ENCODE measurements at regions of chr7 and their contacts with region 1.

Region 1: DNA sequence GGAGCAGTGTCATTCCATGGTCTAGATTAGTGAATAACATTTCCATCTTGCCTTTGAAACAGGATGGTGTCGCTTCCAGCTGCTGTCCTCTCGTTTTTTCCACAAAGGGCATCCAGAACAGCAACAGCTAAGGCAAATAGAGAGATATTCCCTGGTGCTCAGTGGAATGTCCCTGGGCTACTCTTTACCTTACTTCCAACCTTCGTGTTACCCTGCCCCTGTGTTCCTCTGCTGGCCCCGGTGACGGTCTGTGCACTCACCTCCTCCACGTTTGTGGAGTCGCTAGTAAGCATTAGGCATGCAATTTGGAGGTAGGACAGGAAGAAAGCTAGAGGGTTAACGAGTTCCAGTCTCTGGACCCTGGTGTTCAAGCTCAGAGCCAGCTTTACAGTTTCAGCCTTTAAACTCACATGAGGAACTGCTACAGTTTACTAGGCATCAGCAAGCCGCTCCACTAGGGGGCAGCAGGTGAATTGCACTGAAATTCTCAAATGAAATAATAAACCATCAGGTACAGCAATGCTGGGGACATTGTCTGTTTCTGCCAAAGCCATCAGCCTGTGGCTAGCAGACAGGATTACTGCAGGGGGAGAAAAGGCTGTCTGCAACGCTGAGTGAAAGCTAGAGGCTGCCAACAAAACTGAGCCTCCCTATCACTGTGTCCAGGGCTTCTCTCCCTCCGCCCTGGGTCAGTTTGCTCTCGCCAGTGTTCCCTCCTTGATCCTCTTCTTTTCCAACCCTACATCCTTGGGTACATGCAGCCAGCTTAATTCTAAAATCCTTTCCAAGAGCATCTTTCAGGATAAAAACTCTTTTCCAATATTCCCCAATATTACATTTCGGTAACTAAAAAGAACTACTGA is 9.0 kb downstream of the MRPL32 start:
- DNase-seq: peak; percentile 48
- ATAC-seq: peak; percentile 66
- H3K4me3 ChIP-seq: no peak overlapping the region
- H3K27ac ChIP-seq: no peak overlapping the region
- H3K4me1 ChIP-seq: peaks cover 12% of the 10 kb centered on the region; the same call in 1 of the 2 replicates
- H3K27me3 ChIP-seq: no peaks in the 10 kb centered on the region
- CTCF ChIP-seq: peak; percentile 87 to 92 (median 91)
- EP300 ChIP-seq: no peak
- POLR2A ChIP-seq: no peak
- RAD21 ChIP-seq: peak; percentile 97

Region 2: GRCh38 chr7:42924223-42924838 is 16.9 kb before region 1 on chr7:
- CTCF ChIA-PET with region 1: interaction called, 13 read pairs
- POLR2A ChIA-PET with region 1: interaction called, 50 read pairs
- RAD21 ChIA-PET with region 1: interaction called, 20 read pairs
- SMC1A ChIA-PET with region 1: interaction called, 30 read pairs
- in situ Hi-C with region 1: no loop called
- intact Hi-C with region 1: no loop called
- DNase-seq: no peak
- ATAC-seq: peak; percentile 52
- H3K4me3 ChIP-seq: no peak overlapping the region
- H3K27ac ChIP-seq: peak overlapping the region; percentile 53
- H3K4me1 ChIP-seq: no peaks in the 10 kb centered on the region; the same call in 1 of the 2 replicates
- H3K27me3 ChIP-seq: no peaks in the 10 kb centered on the region
- CTCF ChIP-seq: no peak
- EP300 ChIP-seq: no peak
- POLR2A ChIP-seq: no peak
- RAD21 ChIP-seq: no peak

Region 3: DNA sequence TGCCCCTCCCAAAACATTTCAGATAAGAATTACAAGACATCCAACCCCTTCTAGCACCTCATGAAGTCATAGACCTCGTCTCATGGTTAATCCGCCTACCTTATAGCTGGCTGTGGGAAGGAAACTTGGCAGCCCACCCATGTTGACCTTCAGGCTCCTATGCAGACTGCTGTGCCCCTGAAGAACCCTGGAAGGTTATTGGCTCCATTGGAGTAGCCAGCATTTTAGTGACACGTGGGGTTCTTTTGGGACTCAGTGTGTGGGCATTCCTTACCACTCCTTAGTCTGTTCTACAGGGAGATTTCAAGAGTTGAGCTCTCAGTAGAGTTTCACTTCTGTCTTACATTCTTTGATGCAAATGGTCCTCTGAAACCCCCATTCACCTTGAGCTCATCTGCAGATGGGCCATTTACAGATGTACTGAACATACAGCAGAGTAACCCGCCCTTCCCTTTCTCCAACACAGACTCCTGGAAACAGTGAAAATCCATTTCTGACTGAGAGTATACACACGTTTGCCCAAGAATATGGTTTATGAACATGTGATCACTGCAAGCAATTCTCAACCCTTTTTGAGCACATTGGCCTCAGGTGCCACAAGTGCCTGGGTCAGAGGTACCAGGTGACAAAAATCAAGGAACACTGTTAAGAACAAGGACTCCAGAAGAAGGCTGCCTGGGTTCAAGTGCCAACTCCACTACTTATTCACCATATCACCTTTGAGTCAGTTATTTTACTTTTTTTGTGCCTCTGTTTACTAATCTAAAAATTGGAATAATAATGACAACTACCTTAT is 117.3 kb after region 1 on chr7:
- CTCF ChIA-PET with region 1: interaction called, 8 read pairs
- POLR2A ChIA-PET with region 1: no interaction called
- RAD21 ChIA-PET with region 1: interaction called, 8 read pairs
- SMC1A ChIA-PET with region 1: interaction called, 9 read pairs
- in situ Hi-C with region 1: no loop called
- intact Hi-C with region 1: loop called (anchors 2 kb)
- DNase-seq: peak; percentile 53
- ATAC-seq: peak; percentile 61
- H3K4me3 ChIP-seq: no peak overlapping the region
- H3K27ac ChIP-seq: no peak overlapping the region
- H3K4me1 ChIP-seq: peaks cover 17% of the 10 kb centered on the region
- H3K27me3 ChIP-seq: no peaks in the 10 kb centered on the region
- CTCF ChIP-seq: no peak
- EP300 ChIP-seq: no peak
- POLR2A ChIP-seq: no peak
- RAD21 ChIP-seq: no peak

Region 4: DNA sequence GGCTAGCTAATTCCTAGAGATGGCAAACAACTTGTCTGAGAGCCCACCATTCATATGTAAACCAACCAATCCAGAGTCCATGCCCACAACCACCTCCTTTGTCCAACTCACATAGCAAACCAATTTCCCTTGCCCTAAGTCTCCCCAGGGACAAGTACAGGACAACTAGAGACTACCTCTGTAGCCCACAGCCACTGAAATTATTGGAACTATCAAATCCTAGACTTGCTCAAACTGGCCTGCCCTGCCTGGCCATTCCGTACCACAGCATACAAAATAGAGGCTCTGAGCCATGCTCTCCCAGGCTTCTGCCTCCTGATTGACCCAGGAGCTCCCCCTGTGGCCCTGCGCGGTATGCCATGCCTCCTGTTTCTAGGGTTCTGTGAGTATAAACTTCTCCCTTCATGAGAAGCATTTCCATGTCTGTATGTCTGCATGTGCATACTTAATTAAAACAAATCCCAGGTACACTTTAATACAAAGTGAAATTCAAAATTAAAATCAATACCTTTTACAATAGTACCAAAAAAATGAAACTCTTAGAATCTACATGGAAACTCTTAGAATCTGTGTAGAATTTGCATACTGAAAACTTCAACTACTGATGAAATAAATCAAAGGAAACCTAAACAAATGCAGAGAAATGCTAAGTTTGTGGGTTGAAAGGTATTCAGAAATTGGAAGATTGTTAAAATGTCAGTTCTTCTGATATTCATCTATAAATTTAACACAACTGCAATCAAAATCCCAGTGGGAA is 167.2 kb after region 1 on chr7:
- CTCF ChIA-PET with region 1: interaction called, 69 read pairs
- POLR2A ChIA-PET with region 1: interaction called, 3 read pairs
- RAD21 ChIA-PET with region 1: interaction called, 17 read pairs
- SMC1A ChIA-PET with region 1: interaction called, 21 read pairs
- in situ Hi-C with region 1: loop called (anchors 5 kb)
- intact Hi-C with region 1: loop called (anchors 1 kb)
- DNase-seq: peak; percentile 31
- ATAC-seq: peak; percentile 88
- H3K4me3 ChIP-seq: no peak overlapping the region
- H3K27ac ChIP-seq: no peak overlapping the region
- H3K4me1 ChIP-seq: no peaks in the 10 kb centered on the region
- H3K27me3 ChIP-seq: no peaks in the 10 kb centered on the region
- CTCF ChIP-seq: peak; percentile 89 to 98 (median 95); a peak in 5 of 6 replicates
- EP300 ChIP-seq: no peak
- POLR2A ChIP-seq: no peak
- RAD21 ChIP-seq: peak; percentile 86

Region 5: GRCh38 chr7:43260980-43261878 is 320.0 kb after region 1 on chr7:
- CTCF ChIA-PET with region 1: interaction called, 109 read pairs
- POLR2A ChIA-PET with region 1: interaction called, 3 read pairs
- RAD21 ChIA-PET with region 1: interaction called, 26 read pairs
- SMC1A ChIA-PET with region 1: interaction called, 102 read pairs
- in situ Hi-C with region 1: loop called (anchors 5 kb)
- intact Hi-C with region 1: loop called (anchors 1 kb)
- DNase-seq: peak; percentile 33
- ATAC-seq: peak; percentile 99
- H3K4me3 ChIP-seq: no peak overlapping the region
- H3K27ac ChIP-seq: no peak overlapping the region
- H3K4me1 ChIP-seq: no peaks in the 10 kb centered on the region
- H3K27me3 ChIP-seq: no peaks in the 10 kb centered on the region
- CTCF ChIP-seq: peak; percentile 90 to 95 (median 90)
- EP300 ChIP-seq: no peak
- POLR2A ChIP-seq: no peak
- RAD21 ChIP-seq: peak; percentile 96

Region 6: DNA sequence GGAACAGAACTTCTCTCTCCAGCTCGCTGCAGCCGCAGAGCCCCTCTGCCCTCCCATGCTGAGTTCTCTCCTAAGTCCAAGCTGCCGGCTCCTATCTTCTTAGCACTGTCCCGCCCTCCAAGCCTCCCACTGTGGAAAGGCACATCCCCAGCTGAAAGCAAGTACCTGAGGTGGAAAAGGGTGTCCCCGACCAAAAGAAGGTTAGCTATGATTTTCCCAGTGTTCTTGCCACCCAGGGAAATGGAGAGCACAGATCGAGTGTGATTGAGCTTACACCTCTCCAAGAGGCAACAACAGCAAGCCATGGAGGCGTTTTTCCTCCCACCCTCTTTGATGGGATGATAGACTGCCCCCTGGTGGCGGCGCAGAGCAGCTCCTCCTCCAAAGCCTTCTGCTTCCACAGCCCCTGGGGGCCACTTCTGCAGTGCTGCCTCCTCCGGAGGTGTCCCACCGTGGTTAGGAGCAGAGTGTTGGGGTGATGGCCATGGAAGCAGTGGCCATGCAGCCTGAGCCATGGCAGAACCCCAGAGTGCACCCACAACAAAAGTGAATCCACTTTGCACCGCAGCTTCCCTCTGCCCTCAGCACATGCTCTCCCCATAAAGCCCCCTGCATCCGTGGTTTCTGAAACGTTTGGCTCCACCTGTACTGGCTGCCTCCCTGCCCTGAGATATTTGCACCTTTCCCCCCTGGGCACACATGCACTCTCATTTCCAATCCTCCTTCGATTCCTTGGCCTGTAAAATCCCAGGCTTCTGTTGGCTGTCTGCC is 498.6 kb after region 1 on chr7:
- CTCF ChIA-PET with region 1: interaction called, 54 read pairs
- POLR2A ChIA-PET with region 1: no interaction called
- RAD21 ChIA-PET with region 1: interaction called, 20 read pairs
- SMC1A ChIA-PET with region 1: interaction called, 14 read pairs
- in situ Hi-C with region 1: loop called (anchors 5 kb)
- intact Hi-C with region 1: loop called (anchors 2 kb)
- DNase-seq: peak; percentile 13
- ATAC-seq: peak; percentile 97
- H3K4me3 ChIP-seq: no peak overlapping the region
- H3K27ac ChIP-seq: no peak overlapping the region
- H3K4me1 ChIP-seq: no peaks in the 10 kb centered on the region
- H3K27me3 ChIP-seq: no peaks in the 10 kb centered on the region; a peak in 1 of 4 replicates
- CTCF ChIP-seq: peak; percentile 81 to 92 (median 89)
- EP300 ChIP-seq: no peak
- POLR2A ChIP-seq: no peak
- RAD21 ChIP-seq: peak; percentile 66

Region 7: GRCh38 chr7:43454936-43455518 is 513.8 kb after region 1 on chr7:
- CTCF ChIA-PET with region 1: interaction called, 22 read pairs
- POLR2A ChIA-PET with region 1: no interaction called
- RAD21 ChIA-PET with region 1: interaction called, 5 read pairs
- SMC1A ChIA-PET with region 1: interaction called, 7 read pairs
- in situ Hi-C with region 1: no loop called
- intact Hi-C with region 1: no loop called
- DNase-seq: peak; percentile 13
- ATAC-seq: peak; percentile 92
- H3K4me3 ChIP-seq: no peak overlapping the region
- H3K27ac ChIP-seq: no peak overlapping the region
- H3K4me1 ChIP-seq: no peaks in the 10 kb centered on the region
- H3K27me3 ChIP-seq: no peaks in the 10 kb centered on the region; a peak in 2 of 4 replicates
- CTCF ChIP-seq: peak; percentile 44 to 57 (median 45)
- EP300 ChIP-seq: peak in 1 of 2 experiments; percentile 13; a peak in 1 of 4 replicates
- POLR2A ChIP-seq: no peak
- RAD21 ChIP-seq: peak; percentile 50; the same call in 1 of the 2 replicates

Region 8: DNA sequence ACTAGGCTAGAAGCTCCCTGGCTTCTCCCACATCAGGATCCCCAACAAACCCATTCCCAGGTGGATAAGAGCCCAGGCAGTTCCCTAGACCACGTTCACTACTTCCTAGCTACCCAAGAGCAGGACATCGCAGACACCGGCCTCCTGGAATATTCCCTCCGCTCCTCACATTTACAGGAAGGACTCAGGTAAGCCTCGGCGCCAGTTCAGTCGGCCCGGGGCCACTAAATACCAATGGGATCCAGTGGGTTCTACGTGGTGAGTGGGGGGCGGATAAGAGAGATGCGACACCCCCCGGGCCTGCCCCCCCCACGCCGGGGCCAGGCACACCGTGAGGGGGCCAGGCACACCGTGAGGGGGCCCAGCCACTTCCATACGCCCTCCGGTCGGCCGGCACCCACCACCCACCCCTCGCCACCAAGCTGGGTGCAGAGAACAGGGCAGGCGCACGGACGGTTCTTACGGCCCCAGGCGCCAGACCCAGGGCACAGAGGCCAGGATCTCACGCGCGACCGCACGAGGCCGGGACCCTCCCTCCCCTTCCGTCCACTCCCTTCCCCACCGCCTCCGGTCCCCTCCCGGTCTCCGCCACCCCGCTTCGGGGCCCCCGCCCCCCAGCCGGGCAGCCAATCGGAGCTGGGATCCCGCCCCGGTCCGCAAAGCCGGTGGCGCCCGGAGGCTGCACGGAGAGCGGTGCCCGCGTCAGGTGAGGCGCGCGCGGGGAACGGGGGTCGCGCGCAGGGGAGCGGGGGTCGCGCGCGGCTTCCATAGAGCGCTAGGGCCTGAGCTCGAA is 817.0 kb after region 1 on chr7 and contains the start of gene BLVRA:
- CTCF ChIA-PET with region 1: no interaction called
- POLR2A ChIA-PET with region 1: no interaction called
- RAD21 ChIA-PET with region 1: no interaction called
- SMC1A ChIA-PET with region 1: no interaction called
- in situ Hi-C with region 1: no loop called
- intact Hi-C with region 1: no loop called
- DNase-seq: no peak
- ATAC-seq: peak; percentile 82
- H3K4me3 ChIP-seq: peak within 1 kb of the TSS; percentile 87
- H3K27ac ChIP-seq: peak within 1 kb of the TSS; percentile 73
- H3K4me1 ChIP-seq: peaks cover 38% of the 10 kb centered on the region
- H3K27me3 ChIP-seq: no peaks in the 10 kb centered on the region
- CTCF ChIP-seq: no peak
- EP300 ChIP-seq: no peak
- POLR2A ChIP-seq: peak; percentile 70
- RAD21 ChIP-seq: no peak
- polyA plus RNA-seq, gene BLVRA: 187 to 198 TPM

Measured in GM12878 (cell line).